ENCODE measurements at regions of chr2 and their contacts with region 1.

Region 1: GRCh38 chr2:182980115-182980514 is 58.1 kb downstream of the NCKAP1 start:
- DNase-seq: no peak
- ATAC-seq: peak in 2 of 4 donors; percentile 42 to 51
- H3K4me3 ChIP-seq: no peak overlapping the region
- H3K27ac ChIP-seq: no peak overlapping the region
- H3K4me1 ChIP-seq: peaks cover 0 to 3% (median 0%) of the 10 kb centered on the region in 12 donors
- H3K27me3 ChIP-seq: no peaks in the 10 kb centered on the region
- CTCF ChIP-seq: peak; percentile 33 to 78 (median 64)
- POLR2A ChIP-seq: no peak

Region 2: DNA sequence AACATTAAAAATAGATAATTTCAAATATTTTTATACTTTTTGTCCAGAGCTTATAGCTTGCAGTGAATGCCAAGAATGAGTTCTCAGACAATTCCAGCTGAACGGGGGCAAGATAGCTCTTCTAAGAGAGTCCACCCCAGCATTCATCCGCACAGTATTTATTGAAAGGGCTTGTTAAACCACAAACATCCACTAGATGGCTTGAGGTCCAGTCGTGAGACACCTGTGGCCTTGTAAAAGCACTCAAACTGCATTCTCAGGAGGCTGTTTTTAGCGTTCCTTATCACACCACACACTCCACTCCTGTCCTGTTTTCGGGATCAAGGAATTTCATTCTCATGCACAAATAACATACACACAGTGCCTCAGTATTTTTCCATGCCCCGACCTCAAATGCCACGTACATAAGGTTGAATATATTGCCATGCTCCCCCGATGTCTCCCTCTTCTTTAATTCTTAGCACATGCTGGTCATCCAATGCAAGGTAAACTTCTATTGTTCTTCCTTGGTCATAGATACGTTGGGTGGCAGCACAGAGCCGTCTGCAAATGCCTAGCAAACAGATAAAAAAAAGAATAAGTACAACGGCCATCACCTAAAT is 216.7 kb before region 1 on chr2:
- intact Hi-C with region 1: loop called in 9 of 10 experiments (anchors 5 kb)
- DNase-seq: no peak
- ATAC-seq: peak in 3 of 4 donors; percentile 46 to 53 (median 53)
- H3K4me3 ChIP-seq: no peak overlapping the region
- H3K27ac ChIP-seq: peak overlapping the region in 1 of 12 donors; percentile 16
- H3K4me1 ChIP-seq: peaks cover 0 to 25% (median 7%) of the 10 kb centered on the region in 12 donors
- H3K27me3 ChIP-seq: no peaks in the 10 kb centered on the region
- CTCF ChIP-seq: peak; percentile 29 to 65 (median 54)
- POLR2A ChIP-seq: no peak

Region 3: DNA sequence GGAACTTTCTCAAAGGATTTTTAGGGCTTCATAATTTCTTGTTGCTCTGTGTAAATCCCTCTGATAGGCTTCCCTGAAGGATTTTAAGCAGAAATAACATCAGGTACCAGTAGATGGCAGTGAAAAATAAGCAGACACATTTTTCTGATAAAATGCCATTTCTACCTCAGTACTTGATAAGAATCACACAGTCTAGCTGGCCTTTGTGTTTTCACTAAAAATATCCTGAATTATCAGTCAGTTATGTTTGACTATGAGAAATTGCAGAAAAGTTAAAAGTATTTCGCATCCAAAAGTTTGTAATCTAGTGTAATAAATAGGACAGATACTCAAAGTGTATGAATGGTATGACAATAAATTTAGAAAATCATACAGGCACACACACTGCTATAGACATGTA is 195.3 kb before region 1 on chr2:
- intact Hi-C with region 1: loop called in 4 of 10 experiments (anchors 2 to 5 kb)
- DNase-seq: no peak
- ATAC-seq: no peak
- H3K4me3 ChIP-seq: no peak overlapping the region
- H3K27ac ChIP-seq: no peak overlapping the region
- H3K4me1 ChIP-seq: no peaks in the 10 kb centered on the region
- H3K27me3 ChIP-seq: no peaks in the 10 kb centered on the region
- CTCF ChIP-seq: peak; percentile 26 to 67 (median 52)
- POLR2A ChIP-seq: no peak

Region 4: GRCh38 chr2:182915369-182916326 is 64.5 kb before region 1 on chr2:
- intact Hi-C with region 1: loop called in 2 of 10 experiments (anchors 10 kb)
- DNase-seq: peak in 1 of 5 donors; percentile 25
- ATAC-seq: peak; percentile 51 to 86 (median 79)
- H3K4me3 ChIP-seq: no peak overlapping the region
- H3K27ac ChIP-seq: peak overlapping the region in 4 of 12 donors; percentile 3 to 23 (median 8)
- H3K4me1 ChIP-seq: peaks cover 0 to 11% (median 0%) of the 10 kb centered on the region in 12 donors
- H3K27me3 ChIP-seq: no peaks in the 10 kb centered on the region
- CTCF ChIP-seq: no peak
- POLR2A ChIP-seq: no peak

Region 5: GRCh38 chr2:183038341-183039300 is 58.5 kb after region 1 on chr2 and contains the start of gene NCKAP1:
- intact Hi-C with region 1: loop called in 2 of 10 experiments (anchors 5 to 10 kb)
- DNase-seq: peak; percentile 92 to 96 (median 93)
- ATAC-seq: peak; percentile 78 to 94 (median 92)
- H3K4me3 ChIP-seq: peak within 1 kb of the TSS; percentile 74 to 92 (median 87)
- H3K27ac ChIP-seq: peak within 1 kb of the TSS; percentile 94 to 99 (median 98)
- H3K4me1 ChIP-seq: peaks cover 13 to 51% (median 34%) of the 10 kb centered on the region in 12 donors
- H3K27me3 ChIP-seq: peaks cover 0 to 86% (median 0%) of the 10 kb centered on the region in 9 donors
- CTCF ChIP-seq: peak; percentile 46 to 99 (median 94)
- POLR2A ChIP-seq: no peak
- total RNA-seq, gene NCKAP1: 113 to 164 (median 138) TPM

Region 6: DNA sequence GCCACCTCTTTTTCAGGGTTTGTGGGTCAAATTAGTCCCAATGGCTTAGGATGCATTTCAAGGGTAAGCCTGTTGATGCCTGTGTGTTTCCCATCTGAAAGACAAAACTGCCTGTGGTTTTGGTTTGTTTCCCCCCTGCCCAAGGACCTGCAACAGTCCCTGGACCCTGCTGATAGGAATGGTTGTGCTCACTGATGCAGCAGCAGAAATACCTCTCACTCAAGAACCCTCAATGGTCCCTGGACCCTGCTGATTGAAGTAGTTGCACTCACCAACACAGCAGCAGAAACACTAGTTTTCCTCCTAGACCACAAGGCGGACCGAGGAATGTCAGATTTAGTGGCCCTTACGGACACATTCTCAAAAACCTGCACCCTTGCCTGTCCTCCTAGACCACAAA is 531.0 kb after region 1 on chr2:
- intact Hi-C with region 1: no loop called
- DNase-seq: no peak
- ATAC-seq: no peak
- H3K4me3 ChIP-seq: no peak overlapping the region
- H3K27ac ChIP-seq: no peak overlapping the region
- H3K4me1 ChIP-seq: no peaks in the 10 kb centered on the region
- H3K27me3 ChIP-seq: no peaks in the 10 kb centered on the region
- CTCF ChIP-seq: no peak
- POLR2A ChIP-seq: no peak

Measured in heart left ventricle (tissue), 16 donors.